ENCODE measurements at regions of chr1 and their contacts with region 1.

Region 1: GRCh38 chr1:203216274-203217138 is 13.0 kb downstream of the CHIT1 start:
- DNase-seq: peak; percentile 72
- H3K4me3 Mint-ChIP-seq: no peak overlapping the region
- H3K27ac Mint-ChIP-seq: no peak overlapping the region
- H3K4me1 Mint-ChIP-seq: no peaks in the 10 kb centered on the region
- H3K27me3 Mint-ChIP-seq: peaks cover 7% of the 10 kb centered on the region

Region 2: DNA sequence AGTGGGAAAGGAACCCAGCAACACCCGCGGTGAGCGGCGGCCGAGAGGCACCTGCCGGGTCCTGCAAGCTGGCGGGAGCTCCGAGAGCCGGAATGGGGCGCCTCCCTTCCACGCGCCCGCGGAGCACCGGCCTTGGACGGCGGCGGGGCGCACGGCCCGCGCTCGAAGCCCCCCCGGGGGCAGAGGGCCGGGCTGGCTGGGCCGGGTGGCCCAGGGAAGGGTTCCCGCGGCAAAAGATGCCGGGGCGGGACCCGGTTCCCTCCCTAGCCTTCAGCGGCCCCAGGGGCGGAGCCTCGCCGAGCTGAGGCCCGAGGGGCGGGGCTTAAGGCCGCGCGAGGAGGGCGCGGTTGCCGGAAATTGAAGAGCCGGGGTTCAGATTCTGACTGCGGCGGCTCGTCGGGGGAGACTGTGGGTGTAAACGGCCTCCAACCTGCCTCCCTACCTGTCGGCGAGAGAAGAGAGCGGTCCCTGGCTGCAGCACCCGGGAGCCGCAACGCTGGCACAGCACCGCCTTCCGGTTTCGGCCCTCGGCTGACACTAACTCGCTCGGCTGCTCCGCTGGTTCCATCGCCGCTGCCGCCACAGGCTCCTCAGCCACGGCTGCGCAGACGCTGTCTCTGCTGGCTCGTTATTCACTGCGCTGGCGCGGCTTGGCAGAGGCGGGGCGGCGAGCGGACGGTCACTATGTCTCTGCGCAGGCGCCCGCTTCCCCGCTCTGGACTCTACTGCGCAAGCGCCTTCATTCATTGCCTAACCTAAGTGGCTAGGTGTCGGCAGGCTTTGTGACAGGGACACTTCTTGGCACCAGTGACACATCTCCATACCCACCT is 327.8 kb before region 1 on chr1 and contains the start of gene RABIF:
- CTCF ChIA-PET with region 1: no interaction called
- intact Hi-C with region 1: no loop called
- DNase-seq: peak; percentile 97
- H3K4me3 Mint-ChIP-seq: peak within 1 kb of the TSS; percentile 94
- H3K27ac Mint-ChIP-seq: peak within 1 kb of the TSS; percentile 96
- H3K4me1 Mint-ChIP-seq: peaks cover 24% of the 10 kb centered on the region
- H3K27me3 Mint-ChIP-seq: no peaks in the 10 kb centered on the region
- total RNA-seq, gene RABIF: 5.9 to 6.2 TPM

Region 3: GRCh38 chr1:203026031-203026989 is 190.2 kb before region 1 on chr1 and contains the start of gene PPFIA4:
- CTCF ChIA-PET with region 1: interaction called, 10 read pairs
- intact Hi-C with region 1: no loop called
- DNase-seq: peak; percentile 88
- H3K4me3 Mint-ChIP-seq: peak within 1 kb of the TSS; percentile 70
- H3K27ac Mint-ChIP-seq: peak within 1 kb of the TSS; percentile 32
- H3K4me1 Mint-ChIP-seq: peaks cover 10% of the 10 kb centered on the region
- H3K27me3 Mint-ChIP-seq: peaks cover 2% of the 10 kb centered on the region
- total RNA-seq, gene PPFIA4: 4.5 to 6.5 TPM

Region 4: DNA sequence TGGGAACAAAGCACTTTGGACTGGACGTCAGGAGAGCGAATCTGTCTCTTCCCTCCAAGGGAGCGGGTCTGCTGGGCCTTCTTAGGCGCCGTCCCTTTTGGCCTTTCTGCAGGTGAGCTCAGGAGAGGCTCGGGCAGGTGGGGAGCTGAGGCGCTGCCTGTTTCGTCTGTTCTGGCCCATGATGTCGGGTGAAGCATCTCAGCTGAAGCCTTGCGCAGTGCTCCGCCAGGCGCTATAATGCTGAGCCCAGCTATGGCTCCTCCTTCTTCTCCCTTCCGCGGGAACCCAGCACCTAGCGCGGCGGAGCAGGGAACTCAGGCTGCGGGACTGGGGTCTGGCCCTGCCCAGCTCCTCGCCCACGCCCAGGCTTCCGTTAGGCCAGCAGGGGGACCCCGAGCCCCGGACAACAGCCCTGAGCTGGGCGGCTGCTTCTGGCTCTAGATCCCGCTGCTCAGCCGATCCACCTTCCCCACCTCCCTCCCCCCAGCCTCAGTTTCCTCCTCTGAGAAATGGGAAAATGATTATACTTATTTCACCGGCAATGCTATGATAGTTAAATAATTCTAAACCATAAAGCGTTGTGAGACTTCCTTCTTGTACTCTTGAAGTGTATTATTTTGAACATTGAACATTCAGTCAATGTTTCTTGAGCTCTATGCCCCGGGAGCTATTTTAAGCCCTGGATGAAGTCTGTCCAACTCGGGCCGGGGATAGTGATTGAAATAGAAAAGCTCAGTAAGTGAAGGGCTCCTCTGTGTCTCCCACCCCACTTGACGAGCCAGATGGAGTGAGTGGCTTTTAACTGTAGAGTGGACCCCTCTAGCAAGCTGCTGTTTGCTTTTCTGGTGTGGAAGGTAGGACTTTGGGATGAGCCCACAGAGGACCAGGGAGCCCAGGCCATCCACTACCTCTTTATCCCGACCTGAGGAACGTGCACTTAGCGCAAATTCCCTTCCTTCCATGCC is 98.6 kb before region 1 on chr1:
- CTCF ChIA-PET with region 1: interaction called, 11 read pairs
- intact Hi-C with region 1: loop called (anchors 1 kb)
- DNase-seq: peak; percentile 57
- H3K4me3 Mint-ChIP-seq: no peak overlapping the region
- H3K27ac Mint-ChIP-seq: no peak overlapping the region
- H3K4me1 Mint-ChIP-seq: no peaks in the 10 kb centered on the region
- H3K27me3 Mint-ChIP-seq: peaks cover 41% of the 10 kb centered on the region

Region 5: DNA sequence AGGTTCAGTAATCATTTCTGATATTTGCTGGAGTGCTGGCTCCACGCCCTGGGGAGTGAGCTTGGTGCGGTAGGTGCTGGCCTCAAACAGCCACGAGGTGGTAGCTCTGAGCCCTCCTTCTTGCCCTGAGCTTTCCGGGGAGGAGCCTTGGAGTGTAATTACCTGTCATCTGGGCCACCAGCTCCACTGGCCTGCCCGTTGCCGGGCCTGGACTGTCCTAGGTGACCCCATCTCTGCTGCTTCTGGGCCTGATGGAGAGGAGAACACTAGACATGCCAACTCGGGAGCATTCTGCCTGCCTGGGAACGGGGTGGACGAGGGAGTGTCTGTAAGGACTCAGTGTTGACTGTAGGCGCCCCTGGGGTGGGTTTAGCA is 50.0 kb before region 1 on chr1:
- CTCF ChIA-PET with region 1: interaction called, 4 read pairs
- intact Hi-C with region 1: loop called (anchors 2 kb)
- DNase-seq: peak; percentile 26
- H3K4me3 Mint-ChIP-seq: no peak overlapping the region
- H3K27ac Mint-ChIP-seq: no peak overlapping the region
- H3K4me1 Mint-ChIP-seq: no peaks in the 10 kb centered on the region
- H3K27me3 Mint-ChIP-seq: peaks cover 5% of the 10 kb centered on the region

Region 6: GRCh38 chr1:203273206-203273868 is 56.8 kb after region 1 on chr1:
- CTCF ChIA-PET with region 1: interaction called, 35 read pairs
- intact Hi-C with region 1: no loop called
- DNase-seq: peak; percentile 96
- H3K4me3 Mint-ChIP-seq: peak overlapping the region; percentile 72
- H3K27ac Mint-ChIP-seq: peak overlapping the region; percentile 83
- H3K4me1 Mint-ChIP-seq: peaks cover 58% of the 10 kb centered on the region
- H3K27me3 Mint-ChIP-seq: no peaks in the 10 kb centered on the region

Region 7: GRCh38 chr1:203295796-203296195 is 79.3 kb after region 1 on chr1:
- CTCF ChIA-PET with region 1: no interaction called
- intact Hi-C with region 1: no loop called
- DNase-seq: no peak
- H3K4me3 Mint-ChIP-seq: no peak overlapping the region
- H3K27ac Mint-ChIP-seq: no peak overlapping the region
- H3K4me1 Mint-ChIP-seq: peaks cover 54% of the 10 kb centered on the region
- H3K27me3 Mint-ChIP-seq: no peaks in the 10 kb centered on the region

Measured in activated naive CD4-positive, alpha-beta T cell treated with anti-CD3 and anti-CD28 coated beads for 36 hours (primary cell).